B cell (primary cell): ENCODE measurements at regions of chr4 and their contacts with region 1.

Region 1: GRCh38 chr4:99949034-99949998 is 759 bp downstream of the H2AZ1 start:
- DNase-seq: peak; percentile 93
- ATAC-seq: peak; percentile 26
- H3K4me3 ChIP-seq: peak overlapping the region; percentile 84 to 96 (median 84)
- H3K4me3 Mint-ChIP-seq: no peak overlapping the region
- H3K27ac ChIP-seq: peak overlapping the region; percentile 83 to 93
- H3K27ac Mint-ChIP-seq: no peak overlapping the region
- H3K4me1 ChIP-seq: peaks cover 32 to 37% of the 10 kb centered on the region in 2 donors
- H3K4me1 Mint-ChIP-seq: peaks cover 33% of the 10 kb centered on the region
- H3K27me3 ChIP-seq: no peaks in the 10 kb centered on the region
- H3K27me3 Mint-ChIP-seq: no peaks in the 10 kb centered on the region
- CTCF ChIP-seq: peak; percentile 88

Region 2: GRCh38 chr4:98143001-98143899 is 1806.1 kb before region 1 on chr4 and contains the start of gene STPG2:
- CTCF ChIA-PET with region 1: no interaction called
- POLR2A ChIA-PET with region 1: no interaction called
- intact Hi-C with region 1: loop called (anchors 1 kb)
- DNase-seq: peak; percentile 97
- ATAC-seq: peak; percentile 98
- H3K4me3 ChIP-seq: peak within 1 kb of the TSS; percentile 69 to 86 (median 84)
- H3K4me3 Mint-ChIP-seq: peak within 1 kb of the TSS; percentile 94
- H3K27ac ChIP-seq: peak within 1 kb of the TSS; percentile 91 to 93
- H3K27ac Mint-ChIP-seq: peak within 1 kb of the TSS; percentile 96
- H3K4me1 ChIP-seq: peaks cover 15 to 18% of the 10 kb centered on the region in 2 donors
- H3K4me1 Mint-ChIP-seq: peaks cover 24% of the 10 kb centered on the region
- H3K27me3 ChIP-seq: no peaks in the 10 kb centered on the region
- H3K27me3 Mint-ChIP-seq: no peaks in the 10 kb centered on the region
- CTCF ChIP-seq: peak; percentile 77
- total RNA-seq, gene STPG2: 0.41 and 0.49 TPM in 2 replicates

Region 3: GRCh38 chr4:98658287-98659105 is 1290.8 kb before region 1 on chr4 and contains the start of gene TSPAN5:
- CTCF ChIA-PET with region 1: no interaction called
- POLR2A ChIA-PET with region 1: no interaction called
- intact Hi-C with region 1: loop called (anchors 10 kb)
- DNase-seq: peak; percentile 89
- ATAC-seq: peak; percentile 84
- H3K4me3 ChIP-seq: peak within 1 kb of the TSS; percentile 34 to 92 (median 81)
- H3K4me3 Mint-ChIP-seq: peak within 1 kb of the TSS; percentile 89
- H3K27ac ChIP-seq: peak within 1 kb of the TSS; percentile 37 to 74
- H3K27ac Mint-ChIP-seq: peak within 1 kb of the TSS; percentile 75
- H3K4me1 ChIP-seq: peaks cover 27 to 33% of the 10 kb centered on the region in 2 donors
- H3K4me1 Mint-ChIP-seq: peaks cover 52% of the 10 kb centered on the region
- H3K27me3 ChIP-seq: peaks cover 0 to 10% (median 1%) of the 10 kb centered on the region in 4 experiments
- H3K27me3 Mint-ChIP-seq: peaks cover 8% of the 10 kb centered on the region
- CTCF ChIP-seq: no peak
- total RNA-seq, gene TSPAN5: 5.3 TPM in 2 replicates

Region 4: DNA sequence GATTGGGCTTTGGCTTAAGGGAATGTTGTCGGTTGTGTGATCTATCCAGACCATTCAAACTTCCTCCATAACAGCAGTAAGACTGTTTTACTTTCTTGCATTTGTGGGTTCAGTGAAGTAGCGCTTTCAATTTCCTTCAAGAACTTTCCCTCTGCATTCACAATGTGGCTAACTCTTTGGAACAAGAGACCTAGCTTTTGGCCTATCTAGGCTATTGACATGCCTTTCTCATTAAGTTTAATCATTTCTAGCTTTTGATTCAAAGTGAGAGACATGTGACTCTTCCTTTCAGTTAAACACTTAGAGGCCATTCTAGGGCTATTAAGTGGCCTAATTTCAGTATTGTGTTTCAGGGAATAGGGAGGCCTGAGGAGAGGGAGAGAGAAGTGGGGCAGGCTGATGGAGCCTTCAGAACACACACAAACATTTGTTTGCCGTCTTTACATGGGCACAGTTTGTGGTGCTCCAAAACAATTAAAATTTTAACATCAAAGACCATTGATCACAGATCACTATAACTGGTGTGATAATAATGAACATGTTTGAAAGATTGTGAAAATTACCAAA is 894.8 kb before region 1 on chr4:
- CTCF ChIA-PET with region 1: no interaction called
- POLR2A ChIA-PET with region 1: no interaction called
- intact Hi-C with region 1: no loop called
- DNase-seq: no peak
- ATAC-seq: no peak
- H3K4me3 ChIP-seq: no peak overlapping the region
- H3K4me3 Mint-ChIP-seq: no peak overlapping the region
- H3K27ac ChIP-seq: no peak overlapping the region
- H3K27ac Mint-ChIP-seq: peak overlapping the region; percentile 46
- H3K4me1 ChIP-seq: no peaks in the 10 kb centered on the region
- H3K4me1 Mint-ChIP-seq: peaks cover 14% of the 10 kb centered on the region
- H3K27me3 ChIP-seq: no peaks in the 10 kb centered on the region
- H3K27me3 Mint-ChIP-seq: no peaks in the 10 kb centered on the region
- CTCF ChIP-seq: no peak

Region 5: DNA sequence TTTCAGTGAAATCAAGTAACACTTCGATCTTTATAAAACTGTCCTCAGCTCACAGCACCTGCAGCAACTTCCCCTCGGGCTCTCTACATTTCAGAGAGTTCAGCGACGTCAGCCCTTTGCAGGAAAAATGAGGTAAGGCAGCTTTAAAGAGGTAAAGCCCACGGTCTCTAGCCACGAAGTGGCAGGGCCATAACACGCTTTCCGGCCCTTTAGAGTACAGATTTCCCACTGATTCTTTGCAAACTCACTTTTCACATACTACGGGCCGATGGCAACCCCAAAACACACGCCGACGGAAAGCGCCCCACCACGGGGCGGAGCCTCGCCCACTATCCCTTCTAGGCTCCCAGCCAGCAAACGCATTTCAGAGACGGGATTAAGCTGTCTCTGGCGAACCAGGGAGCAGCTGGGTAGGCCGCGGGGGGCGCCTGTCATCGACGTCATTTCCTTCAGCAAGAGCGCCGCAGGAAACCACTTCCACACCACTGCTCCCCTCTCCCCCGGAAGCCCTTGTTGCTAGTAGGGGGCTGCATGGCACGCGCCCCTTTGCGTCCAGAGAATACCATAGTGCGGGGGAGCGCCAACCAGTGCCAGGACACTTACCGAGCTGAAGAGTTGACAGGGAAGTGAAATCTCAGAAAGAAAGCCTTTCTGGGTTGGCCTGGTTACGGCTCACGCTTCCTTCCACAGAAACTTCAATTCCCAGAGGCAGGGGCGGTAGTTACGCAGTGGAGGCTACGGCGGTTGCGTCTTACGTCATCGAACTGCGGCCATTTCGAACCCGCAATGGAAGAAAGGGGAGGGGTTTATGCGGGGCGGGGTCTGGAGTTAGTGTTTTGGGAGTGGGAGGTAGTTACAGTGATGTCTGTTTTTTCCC is 385.8 kb before region 1 on chr4 and contains the start of gene TRMT10A:
- CTCF ChIA-PET with region 1: interaction called, 21 read pairs
- POLR2A ChIA-PET with region 1: interaction called, 3 read pairs
- intact Hi-C with region 1: loop called (anchors 1 kb)
- DNase-seq: peak; percentile 98
- ATAC-seq: peak; percentile 84
- H3K4me3 ChIP-seq: peak within 1 kb of the TSS; percentile 73 to 92 (median 80)
- H3K4me3 Mint-ChIP-seq: peak within 1 kb of the TSS; percentile 99
- H3K27ac ChIP-seq: peak within 1 kb of the TSS; percentile 96
- H3K27ac Mint-ChIP-seq: peak within 1 kb of the TSS; percentile 100
- H3K4me1 ChIP-seq: peaks cover 4 to 9% of the 10 kb centered on the region in 2 donors
- H3K4me1 Mint-ChIP-seq: peaks cover 18% of the 10 kb centered on the region
- H3K27me3 ChIP-seq: peaks cover 0 to 9% (median 2%) of the 10 kb centered on the region in 4 experiments
- H3K27me3 Mint-ChIP-seq: peaks cover 24% of the 10 kb centered on the region
- CTCF ChIP-seq: no peak
- total RNA-seq, gene TRMT10A: 4.5 and 5.5 TPM in 2 replicates

Region 6: DNA sequence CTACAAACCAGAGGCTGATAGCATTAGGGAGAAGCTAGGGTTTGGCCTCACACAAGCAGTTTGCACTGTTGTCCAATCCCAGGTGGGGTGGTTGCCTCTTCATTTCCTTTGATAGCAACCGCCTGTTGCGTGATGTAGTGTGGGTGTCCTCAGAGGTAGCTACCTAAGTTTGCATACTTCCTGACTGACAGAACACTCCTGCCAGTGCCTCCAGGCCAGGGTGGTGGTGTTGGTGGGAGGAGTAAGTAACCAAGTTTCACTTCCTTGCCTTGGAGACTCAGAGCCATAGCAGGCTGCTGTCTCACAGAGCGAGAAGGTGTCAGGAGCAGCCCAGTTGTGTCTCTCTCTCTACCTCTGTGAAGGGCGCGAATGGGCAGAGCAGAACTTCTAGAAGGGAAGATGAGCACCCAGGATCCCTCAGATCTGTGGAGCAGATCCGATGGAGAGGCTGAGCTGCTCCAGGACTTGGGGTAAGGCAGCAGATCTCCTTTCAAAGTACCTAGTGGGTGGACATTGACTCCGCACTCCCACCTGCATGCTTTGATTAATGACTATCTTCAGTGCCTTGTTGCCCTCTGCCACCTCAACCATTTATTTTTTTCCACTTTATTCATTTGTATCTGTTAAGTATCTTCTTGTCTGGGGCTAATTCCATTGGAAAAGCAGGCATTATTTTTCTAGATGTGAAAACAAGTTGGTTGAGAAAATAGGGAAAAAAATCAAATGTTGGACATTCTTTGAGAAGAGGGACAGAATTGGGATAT is 132.6 kb before region 1 on chr4 and contains the start of gene DAPP1:
- CTCF ChIA-PET with region 1: interaction called, 35 read pairs
- POLR2A ChIA-PET with region 1: interaction called, 11 read pairs
- intact Hi-C with region 1: loop called (anchors 1 kb)
- DNase-seq: peak; percentile 94
- ATAC-seq: peak; percentile 94
- H3K4me3 ChIP-seq: peak within 1 kb of the TSS; percentile 60 to 100 (median 91)
- H3K4me3 Mint-ChIP-seq: peak within 1 kb of the TSS; percentile 95
- H3K27ac ChIP-seq: peak within 1 kb of the TSS; percentile 77 to 95
- H3K27ac Mint-ChIP-seq: peak within 1 kb of the TSS; percentile 90
- H3K4me1 ChIP-seq: peaks cover 50 to 57% of the 10 kb centered on the region in 2 donors
- H3K4me1 Mint-ChIP-seq: peaks cover 58% of the 10 kb centered on the region
- H3K27me3 ChIP-seq: no peaks in the 10 kb centered on the region
- H3K27me3 Mint-ChIP-seq: no peaks in the 10 kb centered on the region
- CTCF ChIP-seq: no peak
- total RNA-seq, gene DAPP1: 166 and 169 TPM in 2 replicates

Region 7: DNA sequence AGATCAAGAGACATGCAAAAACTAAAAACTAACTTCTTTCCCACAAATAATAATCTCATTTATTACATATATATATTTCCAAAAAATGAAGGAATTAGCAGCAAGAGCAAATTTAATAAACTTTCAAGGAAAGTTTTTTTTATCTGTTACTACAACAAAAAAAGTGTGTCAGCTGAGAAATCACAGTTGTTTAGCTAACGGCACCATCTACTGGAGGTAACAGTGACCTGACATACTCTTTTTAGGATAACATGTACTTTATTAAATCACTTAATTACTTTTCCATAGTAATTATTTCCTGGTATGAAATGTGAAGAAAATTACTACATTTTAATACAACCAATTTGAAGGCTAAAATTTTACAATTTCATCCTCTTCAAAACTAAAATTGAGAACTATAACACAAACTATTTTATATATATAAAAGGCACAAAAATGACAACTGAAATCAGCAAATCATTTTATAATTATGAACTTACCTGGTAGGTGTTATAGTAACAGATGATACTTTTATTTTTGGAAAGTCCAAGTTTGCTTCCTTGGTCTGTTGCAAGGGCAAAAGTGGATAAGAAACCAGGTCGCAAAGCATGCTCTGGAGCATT is 64.2 kb before region 1 on chr4:
- CTCF ChIA-PET with region 1: interaction called, 11 read pairs
- POLR2A ChIA-PET with region 1: no interaction called
- intact Hi-C with region 1: no loop called
- DNase-seq: peak; percentile 68
- ATAC-seq: no peak
- H3K4me3 ChIP-seq: no peak overlapping the region
- H3K4me3 Mint-ChIP-seq: no peak overlapping the region
- H3K27ac ChIP-seq: no peak overlapping the region
- H3K27ac Mint-ChIP-seq: no peak overlapping the region
- H3K4me1 ChIP-seq: no peaks in the 10 kb centered on the region
- H3K4me1 Mint-ChIP-seq: peaks cover 2% of the 10 kb centered on the region
- H3K27me3 ChIP-seq: no peaks in the 10 kb centered on the region
- H3K27me3 Mint-ChIP-seq: no peaks in the 10 kb centered on the region
- CTCF ChIP-seq: peak; percentile 81

Region 8: DNA sequence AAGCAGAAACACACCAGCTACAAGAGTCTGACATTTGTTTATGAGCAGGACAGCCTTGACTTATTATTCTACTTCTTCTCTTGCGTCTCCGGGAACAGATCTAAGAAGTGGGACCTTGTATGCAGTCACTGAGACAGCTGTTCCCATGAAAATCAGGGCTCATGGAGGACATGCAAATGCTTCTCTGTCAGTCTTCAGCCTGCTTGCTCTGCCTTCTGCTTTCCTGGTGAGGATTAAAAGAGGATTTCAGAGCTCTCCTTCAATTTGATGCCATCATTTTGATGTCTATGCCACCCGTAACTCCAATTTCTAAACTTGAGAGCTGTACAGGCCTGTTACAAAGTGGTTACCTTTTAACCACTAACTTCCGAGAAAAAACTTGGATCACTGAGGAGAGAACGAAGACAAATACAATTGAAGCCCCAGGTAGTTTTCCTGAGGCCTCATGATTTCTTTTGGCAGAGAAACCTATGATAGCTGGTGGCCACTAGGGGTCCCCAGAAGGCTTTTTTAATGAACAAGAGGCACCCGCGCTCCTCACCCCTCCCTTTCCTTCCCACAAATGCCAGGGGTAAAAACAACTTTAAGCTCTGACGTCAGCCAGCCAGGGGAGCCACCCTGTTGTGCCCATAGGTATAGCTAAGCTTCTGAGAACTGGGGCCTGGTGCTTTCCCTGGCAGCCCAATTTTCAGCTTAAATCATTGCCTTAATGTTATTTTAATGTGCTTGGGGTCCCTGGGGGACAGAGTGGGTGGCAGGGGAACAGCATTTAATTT is 144.0 kb after region 1 on chr4:
- CTCF ChIA-PET with region 1: interaction called, 8 read pairs
- POLR2A ChIA-PET with region 1: no interaction called
- intact Hi-C with region 1: loop called (anchors 5 kb)
- DNase-seq: peak; percentile 93
- ATAC-seq: peak; percentile 99
- H3K4me3 ChIP-seq: no peak overlapping the region
- H3K4me3 Mint-ChIP-seq: peak overlapping the region; percentile 48
- H3K27ac ChIP-seq: no peak overlapping the region
- H3K27ac Mint-ChIP-seq: peak overlapping the region; percentile 57
- H3K4me1 ChIP-seq: peaks cover 7 to 12% of the 10 kb centered on the region in 2 donors
- H3K4me1 Mint-ChIP-seq: peaks cover 26% of the 10 kb centered on the region
- H3K27me3 ChIP-seq: no peaks in the 10 kb centered on the region
- H3K27me3 Mint-ChIP-seq: peaks cover 5% of the 10 kb centered on the region
- CTCF ChIP-seq: peak; percentile 84